Cardiac septum (tissue), 1 donor: ENCODE measurements at regions of chr1 and their contacts with region 1.

Region 1: DNA sequence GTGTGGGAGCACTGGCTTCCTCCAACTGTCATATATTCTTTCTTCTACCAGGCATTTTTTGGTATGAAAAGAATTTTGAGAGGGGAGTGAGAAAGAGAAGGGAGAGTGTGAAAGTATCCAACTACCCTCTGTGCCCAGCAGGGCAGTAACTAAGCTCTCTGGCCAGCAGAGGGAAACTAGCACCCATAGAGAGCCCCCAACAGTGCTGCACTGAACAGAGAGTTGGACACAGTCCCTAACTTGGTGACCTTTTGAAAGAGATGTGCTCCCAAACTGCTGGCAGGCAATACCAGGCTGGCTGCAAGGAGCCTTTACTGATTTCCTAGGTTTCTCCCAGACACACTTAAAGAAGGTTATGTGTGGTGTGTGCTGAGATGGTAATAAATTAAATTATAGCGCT is 118.8 kb upstream of the PBX1 start:
- DNase-seq: peak; percentile 76

Region 2: DNA sequence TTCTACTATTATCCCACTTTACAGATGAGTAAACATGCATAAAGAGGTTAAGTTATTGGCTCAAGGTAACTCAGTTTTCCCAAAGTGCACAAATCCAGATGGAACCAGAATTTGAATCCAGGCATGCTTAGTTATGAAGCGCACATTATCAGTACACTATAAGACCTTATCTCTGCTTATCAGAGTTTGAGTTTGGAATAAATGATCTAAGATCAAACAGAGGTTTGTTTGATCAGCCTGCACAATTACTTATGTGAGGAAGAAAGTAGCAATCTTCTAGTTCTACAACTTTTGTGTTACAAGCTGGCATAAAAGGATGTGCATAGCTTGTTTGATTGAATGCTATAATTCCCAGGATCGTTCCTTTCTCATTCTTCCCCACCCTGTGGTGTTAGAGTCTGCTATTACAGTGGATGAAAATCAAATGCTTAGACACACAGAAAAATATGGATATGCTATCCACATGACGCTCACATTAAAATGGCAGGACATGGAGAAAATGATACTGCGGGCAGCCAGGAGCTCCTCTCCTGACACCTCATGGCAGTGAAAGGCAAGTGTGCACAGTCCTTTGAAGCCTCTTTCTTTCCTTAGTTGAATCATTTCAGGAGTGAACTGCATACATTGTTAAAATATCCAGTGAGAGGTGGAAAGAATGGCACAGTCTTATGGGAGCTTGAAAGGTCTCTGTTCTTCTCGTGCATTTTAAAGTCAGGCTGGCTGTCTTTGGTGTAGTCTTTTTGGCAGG is 94.8 kb after region 1 on chr1:
- intact Hi-C with region 1: loop called (anchors 5 kb)
- DNase-seq: no peak

Region 3: DNA sequence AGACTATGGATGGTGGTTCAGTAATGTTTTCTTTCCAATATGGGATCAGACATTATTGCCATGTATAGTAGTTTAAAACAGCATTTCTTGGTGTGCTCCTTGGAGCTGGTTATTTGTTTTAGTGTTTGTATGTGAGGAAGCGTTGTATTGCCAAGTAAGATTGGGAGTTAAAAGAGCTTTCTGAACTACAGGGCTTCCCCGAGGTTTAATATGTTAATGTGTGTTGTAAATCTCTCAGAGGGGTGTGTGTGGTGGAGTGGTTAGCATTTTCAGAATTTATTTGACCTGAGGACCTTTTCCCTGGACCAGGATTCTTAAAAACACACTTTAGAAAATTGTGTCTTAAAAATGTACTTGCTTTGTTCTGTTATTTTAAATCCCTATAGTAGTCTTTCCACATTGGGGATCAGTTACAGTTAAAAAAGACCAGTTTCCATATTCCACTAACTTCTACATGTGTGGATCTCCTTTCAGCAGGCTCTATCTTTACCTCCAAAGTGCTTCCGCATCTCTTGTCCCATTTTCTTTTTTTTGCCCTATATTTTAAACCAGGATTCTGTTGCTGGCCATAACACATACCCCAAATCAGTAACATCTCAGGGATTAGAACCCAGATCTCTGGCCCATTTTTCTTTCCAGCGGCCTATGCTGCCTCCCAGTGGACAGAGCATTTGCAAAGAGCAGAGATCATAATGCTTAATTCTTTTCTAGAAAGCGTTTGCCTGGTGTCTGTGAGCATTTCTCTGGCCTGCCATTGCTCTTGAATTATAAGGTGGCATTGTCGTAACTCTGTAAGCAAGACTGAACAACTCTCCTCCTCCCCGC is 177.4 kb after region 1 on chr1:
- intact Hi-C with region 1: loop called (anchors 5 kb)
- DNase-seq: no peak